ENCODE measurements at regions of chr9 and their contacts with region 1.

Region 1: DNA sequence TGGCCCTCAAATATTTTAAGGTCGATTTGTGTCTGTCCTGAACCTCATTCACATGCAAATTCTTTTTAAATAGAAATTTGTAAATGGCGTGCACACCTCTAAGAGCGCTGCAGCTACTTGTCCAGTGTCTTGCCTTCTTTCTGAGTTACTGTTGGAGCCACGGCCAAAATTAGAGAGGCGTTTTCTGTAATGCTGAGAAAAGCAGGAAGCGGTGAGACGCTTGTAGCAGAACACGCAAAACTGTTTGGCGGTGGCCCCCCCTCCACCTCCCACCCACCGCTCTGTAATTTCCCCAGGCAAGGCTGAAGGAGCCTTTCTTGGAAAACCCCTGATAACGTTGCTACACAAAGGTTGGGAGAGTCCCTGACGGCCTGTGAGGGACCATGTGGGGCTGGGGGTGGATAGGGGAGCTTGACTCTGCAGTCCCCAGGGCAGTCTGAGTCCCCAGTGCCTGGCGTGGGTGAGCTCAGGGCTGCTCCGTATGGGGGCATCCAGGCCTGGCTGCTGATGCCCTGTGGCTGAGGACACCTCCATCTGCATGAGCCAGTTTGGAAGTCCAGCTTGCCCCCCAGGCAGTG is 96.5 kb downstream of the GADD45G start:
- DNase-seq: peak; percentile 82
- H3K4me3 Mint-ChIP-seq: peak overlapping the region; percentile 92
- H3K27ac Mint-ChIP-seq: peak overlapping the region; percentile 97
- H3K4me1 Mint-ChIP-seq: peaks cover 98% of the 10 kb centered on the region
- H3K27me3 Mint-ChIP-seq: no peaks in the 10 kb centered on the region

Region 2: GRCh38 chr9:89602978-89603766 is 98.1 kb before region 1 on chr9:
- intact Hi-C with region 1: loop called (anchors 1 kb)
- DNase-seq: peak; percentile 85
- H3K4me3 Mint-ChIP-seq: peak overlapping the region; percentile 92
- H3K27ac Mint-ChIP-seq: peak overlapping the region; percentile 81
- H3K4me1 Mint-ChIP-seq: peaks cover 32% of the 10 kb centered on the region
- H3K27me3 Mint-ChIP-seq: peaks cover 10% of the 10 kb centered on the region

Region 3: DNA sequence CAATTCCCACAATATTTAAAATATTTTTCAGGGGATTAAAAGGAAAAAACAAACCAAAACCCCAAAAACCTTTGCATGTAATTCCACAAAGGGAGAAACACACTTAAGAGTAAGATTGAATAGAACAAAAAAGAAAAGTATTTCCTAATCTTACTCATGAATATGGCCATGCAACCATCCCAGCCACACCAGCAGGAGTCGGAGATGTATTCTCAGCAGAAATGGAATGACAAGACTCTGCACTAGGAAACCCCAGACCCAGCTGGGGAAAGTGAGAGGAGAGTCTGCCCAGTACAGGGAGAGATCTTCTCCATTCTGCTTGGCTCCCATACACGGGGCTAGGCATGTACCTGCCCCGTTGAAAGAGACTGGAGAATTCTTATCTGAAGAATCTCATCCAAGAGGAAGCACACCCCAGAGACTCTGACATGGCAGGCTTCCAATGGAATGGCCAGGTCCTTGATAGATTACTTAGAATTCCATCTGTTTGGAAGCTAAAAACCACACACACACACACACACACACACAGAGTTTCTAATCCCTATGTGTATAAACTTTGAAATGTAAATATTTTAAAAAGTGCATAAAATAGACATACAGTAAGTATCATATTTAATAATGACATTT is 22.3 kb after region 1 on chr9:
- intact Hi-C with region 1: loop called (anchors 2 kb)
- DNase-seq: no peak
- H3K4me3 Mint-ChIP-seq: no peak overlapping the region
- H3K27ac Mint-ChIP-seq: no peak overlapping the region
- H3K4me1 Mint-ChIP-seq: peaks cover 42% of the 10 kb centered on the region
- H3K27me3 Mint-ChIP-seq: no peaks in the 10 kb centered on the region

Region 4: GRCh38 chr9:89825669-89826068 is 124.4 kb after region 1 on chr9:
- intact Hi-C with region 1: loop called (anchors 1 kb)
- DNase-seq: no peak
- H3K4me3 Mint-ChIP-seq: no peak overlapping the region
- H3K27ac Mint-ChIP-seq: no peak overlapping the region
- H3K4me1 Mint-ChIP-seq: peaks cover 43% of the 10 kb centered on the region
- H3K27me3 Mint-ChIP-seq: peaks cover 1% of the 10 kb centered on the region

Region 5: DNA sequence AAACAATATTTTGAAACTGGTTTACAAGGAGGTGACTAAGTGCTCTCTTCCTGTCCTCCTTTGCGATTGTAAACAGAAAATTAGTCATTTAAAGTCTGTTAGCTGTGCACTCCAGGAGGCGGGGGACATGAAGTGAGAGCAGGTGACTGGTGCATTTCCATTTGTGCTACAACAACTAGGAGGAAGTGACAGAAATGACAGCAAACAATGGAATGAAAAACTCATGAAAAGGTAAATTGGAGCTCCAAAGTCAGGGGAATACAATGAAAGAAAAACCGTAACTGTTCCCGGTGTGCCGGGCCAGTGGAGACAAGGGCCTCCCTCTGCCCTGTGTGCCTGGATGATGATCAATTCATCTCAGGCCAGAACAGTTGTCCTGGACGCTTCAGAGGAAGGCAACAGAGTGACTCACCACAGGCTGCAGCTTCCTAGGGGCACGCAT is 343.4 kb after region 1 on chr9:
- intact Hi-C with region 1: loop called (anchors 1 kb)
- DNase-seq: peak; percentile 9
- H3K4me3 Mint-ChIP-seq: no peak overlapping the region
- H3K27ac Mint-ChIP-seq: peak overlapping the region; percentile 86
- H3K4me1 Mint-ChIP-seq: peaks cover 29% of the 10 kb centered on the region
- H3K27me3 Mint-ChIP-seq: no peaks in the 10 kb centered on the region